Activated CD4-positive, alpha-beta memory T cell treated with anti-CD3 and anti-CD28 coated beads, Interleukin-2, amount 10 ng/mL, durations not matched to agents 7 days and 5 days (primary cell): ENCODE measurements at regions of chr1 and their contacts with region 1.

Region 1: DNA sequence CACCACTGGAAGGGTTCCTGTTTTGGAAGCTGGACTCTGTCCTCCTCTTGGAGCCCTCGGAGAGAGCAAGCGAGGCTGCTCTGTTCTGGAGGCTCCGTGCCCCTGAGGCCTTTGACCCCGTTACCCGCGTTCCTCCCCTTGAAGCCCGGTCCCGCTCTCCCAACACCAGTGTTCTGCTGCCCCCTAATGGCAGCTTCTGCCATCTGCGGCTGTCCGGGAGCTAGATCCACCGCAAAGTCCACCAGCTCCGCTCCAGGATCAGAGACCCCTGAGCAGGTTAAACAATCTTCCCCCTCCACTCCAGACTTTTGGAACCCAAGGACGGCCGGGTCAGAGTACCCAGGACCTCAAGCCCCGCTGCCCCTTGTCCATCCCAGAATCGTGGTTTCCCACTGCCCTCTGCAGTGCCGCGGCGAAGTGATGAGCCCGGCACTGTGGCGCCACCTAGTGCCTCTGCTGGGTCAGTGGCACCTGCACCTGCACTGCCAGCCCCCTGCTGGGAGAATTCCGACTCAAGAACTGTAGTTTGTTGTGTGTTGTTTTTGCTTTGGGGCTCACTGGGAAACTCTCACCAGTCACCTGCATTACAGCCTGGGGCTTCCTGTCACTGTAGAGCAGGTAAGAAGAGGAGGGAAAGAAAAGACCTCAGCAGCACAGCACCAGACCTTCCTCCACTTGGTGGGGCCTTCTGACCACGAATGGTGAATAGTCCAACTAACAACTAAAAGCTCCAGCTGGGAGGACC is 63.5 kb upstream of the NFASC start:
- DNase-seq: peak; percentile 85
- H3K4me3 Mint-ChIP-seq: peak overlapping the region; percentile 82
- H3K27ac Mint-ChIP-seq: peak overlapping the region; percentile 53
- H3K4me1 Mint-ChIP-seq: peaks cover 16% of the 10 kb centered on the region
- H3K27me3 Mint-ChIP-seq: peaks cover 9% of the 10 kb centered on the region

Region 2: GRCh38 chr1:204446370-204447111 is 360.6 kb before region 1 on chr1:
- CTCF ChIA-PET with region 1: interaction called, 20 read pairs
- POLR2A ChIA-PET with region 1: no interaction called
- DNase-seq: peak; percentile 79
- H3K4me3 Mint-ChIP-seq: no peak overlapping the region
- H3K27ac Mint-ChIP-seq: peak overlapping the region; percentile 57
- H3K4me1 Mint-ChIP-seq: peaks cover 61% of the 10 kb centered on the region
- H3K27me3 Mint-ChIP-seq: no peaks in the 10 kb centered on the region

Region 3: DNA sequence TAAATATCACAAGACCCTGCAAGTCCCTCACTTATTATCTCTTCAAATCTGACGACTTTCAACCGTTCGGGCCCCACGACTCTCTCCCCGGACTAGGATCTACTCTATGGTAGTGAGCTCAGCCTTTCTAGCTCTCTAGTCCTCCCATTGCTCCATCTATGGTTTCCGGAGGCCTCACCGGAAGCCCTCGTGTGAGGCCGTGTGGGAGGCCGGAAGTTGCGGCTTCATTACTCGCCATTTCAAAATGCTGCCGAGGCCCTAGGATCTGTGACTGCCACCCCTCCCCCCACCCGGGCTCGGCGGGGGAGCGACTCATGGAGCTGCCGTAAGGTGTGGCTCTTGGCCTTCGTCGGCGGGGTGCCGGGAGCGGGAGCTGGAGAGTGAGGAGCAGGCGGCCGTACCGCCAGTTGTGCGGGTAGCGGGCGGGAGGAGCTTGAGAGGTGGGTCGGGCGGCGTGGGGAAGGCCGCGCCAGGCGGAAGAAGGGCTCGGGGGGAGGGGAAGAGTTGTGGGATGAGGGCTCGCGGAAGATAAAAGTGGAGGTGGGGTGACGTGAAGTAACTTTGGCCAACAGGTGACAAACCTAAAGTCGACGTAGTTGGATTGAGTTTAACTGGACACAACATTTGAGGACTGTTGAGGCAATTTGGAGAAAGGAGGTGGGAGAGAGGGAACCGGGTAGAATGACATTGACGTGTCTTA is 290.8 kb before region 1 on chr1 and contains the start of gene MDM4:
- CTCF ChIA-PET with region 1: interaction called, 19 read pairs
- POLR2A ChIA-PET with region 1: interaction called, 3 read pairs
- DNase-seq: peak; percentile 95
- H3K4me3 Mint-ChIP-seq: no peak within 1 kb of the TSS
- H3K27ac Mint-ChIP-seq: no peak within 1 kb of the TSS
- H3K4me1 Mint-ChIP-seq: peaks cover 64% of the 10 kb centered on the region
- H3K27me3 Mint-ChIP-seq: no peaks in the 10 kb centered on the region
- total RNA-seq, gene MDM4: 85.1 to 95.4 TPM

Region 4: DNA sequence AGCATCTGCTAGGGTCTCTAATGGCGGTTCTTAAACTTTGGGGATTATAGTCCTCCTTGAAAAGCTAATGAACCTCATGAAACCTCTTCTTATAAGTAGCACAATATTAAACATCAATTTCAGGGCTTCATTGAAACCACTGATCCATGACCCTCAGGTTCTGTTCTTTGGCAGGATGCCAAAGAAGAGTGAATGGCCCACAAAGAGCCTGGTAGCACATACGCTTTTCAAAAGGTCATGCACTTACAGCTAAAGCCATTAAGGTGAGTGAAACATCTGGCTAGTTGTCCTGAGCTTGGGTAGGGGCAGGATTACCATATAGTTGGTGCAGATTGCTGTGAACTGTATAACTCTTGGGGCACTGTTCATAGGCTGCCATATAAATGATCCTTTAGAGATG is 248.6 kb before region 1 on chr1:
- CTCF ChIA-PET with region 1: interaction called, 13 read pairs
- POLR2A ChIA-PET with region 1: no interaction called
- DNase-seq: no peak
- H3K4me3 Mint-ChIP-seq: no peak overlapping the region
- H3K27ac Mint-ChIP-seq: no peak overlapping the region
- H3K4me1 Mint-ChIP-seq: peaks cover 23% of the 10 kb centered on the region
- H3K27me3 Mint-ChIP-seq: no peaks in the 10 kb centered on the region

Region 5: DNA sequence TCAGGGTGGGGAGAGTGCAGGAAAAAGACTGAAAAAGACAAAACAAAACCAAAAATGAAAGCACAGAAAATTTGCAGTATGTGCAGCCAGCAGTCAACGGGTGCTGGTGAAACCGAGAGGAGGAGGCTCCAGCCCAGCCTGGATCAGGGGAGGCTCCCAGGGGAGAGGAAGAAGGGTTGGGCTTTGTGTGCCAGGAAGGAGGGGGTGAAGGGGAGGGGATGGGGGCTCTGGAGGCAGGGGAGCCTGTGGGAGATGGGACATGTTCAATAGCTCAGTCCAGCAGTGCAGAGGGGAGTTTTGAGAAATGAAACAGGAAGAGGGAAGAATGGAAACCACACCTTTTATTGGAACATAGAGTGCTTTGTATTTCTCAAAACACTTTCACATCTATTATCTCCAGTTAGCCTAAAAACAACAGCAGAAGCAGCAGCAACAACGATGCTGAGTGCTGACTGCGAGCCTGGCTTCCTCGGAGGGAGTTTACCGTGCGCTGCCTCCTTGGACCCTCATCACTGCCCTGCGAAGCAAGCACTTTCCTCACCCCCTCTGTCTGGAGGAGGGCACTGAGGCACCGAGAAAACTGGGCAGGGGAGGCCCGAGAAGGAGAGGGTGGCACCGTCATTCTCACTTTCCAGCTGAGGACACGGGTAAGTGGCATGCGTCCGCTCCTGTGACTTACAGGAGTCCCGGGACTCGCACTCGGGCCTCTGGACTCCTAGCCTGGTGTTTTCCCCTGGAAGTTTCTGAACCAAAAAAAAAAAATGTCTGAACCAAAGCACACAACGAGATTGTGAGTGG is 228.0 kb before region 1 on chr1:
- CTCF ChIA-PET with region 1: interaction called, 27 read pairs
- POLR2A ChIA-PET with region 1: interaction called, 4 read pairs
- DNase-seq: peak; percentile 55
- H3K4me3 Mint-ChIP-seq: peak overlapping the region; percentile 74
- H3K27ac Mint-ChIP-seq: peak overlapping the region; percentile 88
- H3K4me1 Mint-ChIP-seq: peaks cover 27% of the 10 kb centered on the region
- H3K27me3 Mint-ChIP-seq: no peaks in the 10 kb centered on the region

Region 6: GRCh38 chr1:204746838-204747442 is 60.2 kb before region 1 on chr1:
- CTCF ChIA-PET with region 1: interaction called, 12 read pairs
- POLR2A ChIA-PET with region 1: no interaction called
- DNase-seq: peak; percentile 52
- H3K4me3 Mint-ChIP-seq: no peak overlapping the region
- H3K27ac Mint-ChIP-seq: no peak overlapping the region
- H3K4me1 Mint-ChIP-seq: no peaks in the 10 kb centered on the region
- H3K27me3 Mint-ChIP-seq: peaks cover 14% of the 10 kb centered on the region

Region 7: GRCh38 chr1:204819495-204819894 is 12.4 kb after region 1 on chr1:
- CTCF ChIA-PET with region 1: interaction called, 79 read pairs
- POLR2A ChIA-PET with region 1: no interaction called
- DNase-seq: no peak
- H3K4me3 Mint-ChIP-seq: no peak overlapping the region
- H3K27ac Mint-ChIP-seq: no peak overlapping the region
- H3K4me1 Mint-ChIP-seq: no peaks in the 10 kb centered on the region
- H3K27me3 Mint-ChIP-seq: peaks cover 18% of the 10 kb centered on the region